Panc1 (cell line): ENCODE measurements at regions of chr6 and their contacts with region 1.

Region 1: DNA sequence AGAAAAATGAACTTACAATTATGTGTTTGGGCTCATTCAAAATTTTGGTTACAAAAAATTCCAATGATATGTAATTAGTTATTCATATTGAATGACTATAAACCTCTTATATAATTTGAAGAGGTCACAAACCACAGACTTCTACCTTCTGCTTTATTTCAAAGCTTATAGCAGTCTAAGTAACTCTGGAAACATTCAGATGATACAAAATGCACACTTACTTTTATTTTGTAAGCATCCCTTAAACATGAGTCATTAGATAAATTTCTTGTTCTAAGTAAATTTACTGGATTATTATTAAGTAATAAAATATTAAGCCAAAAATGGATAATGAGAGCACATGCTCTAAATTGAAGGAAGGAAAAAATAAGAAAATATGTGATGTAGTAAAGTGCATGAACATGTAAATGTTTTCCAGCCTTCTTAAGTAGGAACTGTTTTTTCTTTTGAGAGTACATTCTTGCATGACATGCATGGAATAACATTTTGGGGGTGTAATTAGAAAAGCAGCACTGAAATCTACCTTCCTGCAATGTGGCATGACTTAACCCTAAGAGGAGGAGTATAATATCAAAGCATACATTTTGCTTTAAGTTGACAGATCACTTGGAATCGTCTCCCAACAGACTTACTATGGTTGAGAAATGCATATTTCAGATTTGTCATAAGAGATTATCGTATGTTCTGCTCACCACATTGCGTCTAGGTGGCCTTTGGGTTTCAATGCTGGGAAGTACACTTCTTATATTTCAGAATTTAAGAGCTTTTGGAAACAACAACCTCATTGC is 372.7 kb upstream of the HSF2 start:
- DNase-seq: no peak
- ATAC-seq: no peak
- H3K4me3 ChIP-seq: no peak overlapping the region
- H3K27ac ChIP-seq: no peak overlapping the region
- H3K4me1 ChIP-seq: no peaks in the 10 kb centered on the region
- H3K27me3 ChIP-seq: no peaks in the 10 kb centered on the region
- CTCF ChIP-seq: no peak

Region 2: DNA sequence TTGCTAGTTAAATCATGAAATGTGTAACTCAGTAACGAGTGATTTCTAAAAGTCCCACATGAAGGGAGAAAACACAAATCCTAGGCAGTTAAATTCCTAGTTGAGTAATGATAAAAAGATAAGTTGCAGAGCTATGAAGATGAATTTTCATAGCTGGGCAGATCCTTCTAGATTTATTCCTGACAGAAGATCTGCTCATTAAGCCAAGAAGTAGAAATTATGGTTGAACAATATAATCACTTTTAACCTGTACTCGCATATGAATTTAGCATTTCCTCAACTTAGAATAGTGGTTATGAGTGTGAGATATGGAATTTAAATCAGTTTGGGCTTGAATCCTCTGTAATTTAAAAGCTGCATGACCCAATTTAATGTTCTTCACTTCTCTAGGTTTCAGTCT is 13.5 kb after region 1 on chr6:
- CTCF ChIA-PET with region 1: no interaction called
- POLR2A ChIA-PET with region 1: no interaction called
- in situ Hi-C with region 1: no loop called
- intact Hi-C with region 1: loop called (anchors 1 kb)
- DNase-seq: no peak
- ATAC-seq: no peak
- H3K4me3 ChIP-seq: no peak overlapping the region
- H3K27ac ChIP-seq: no peak overlapping the region
- H3K4me1 ChIP-seq: no peaks in the 10 kb centered on the region
- H3K27me3 ChIP-seq: no peaks in the 10 kb centered on the region
- CTCF ChIP-seq: no peak

Region 3: DNA sequence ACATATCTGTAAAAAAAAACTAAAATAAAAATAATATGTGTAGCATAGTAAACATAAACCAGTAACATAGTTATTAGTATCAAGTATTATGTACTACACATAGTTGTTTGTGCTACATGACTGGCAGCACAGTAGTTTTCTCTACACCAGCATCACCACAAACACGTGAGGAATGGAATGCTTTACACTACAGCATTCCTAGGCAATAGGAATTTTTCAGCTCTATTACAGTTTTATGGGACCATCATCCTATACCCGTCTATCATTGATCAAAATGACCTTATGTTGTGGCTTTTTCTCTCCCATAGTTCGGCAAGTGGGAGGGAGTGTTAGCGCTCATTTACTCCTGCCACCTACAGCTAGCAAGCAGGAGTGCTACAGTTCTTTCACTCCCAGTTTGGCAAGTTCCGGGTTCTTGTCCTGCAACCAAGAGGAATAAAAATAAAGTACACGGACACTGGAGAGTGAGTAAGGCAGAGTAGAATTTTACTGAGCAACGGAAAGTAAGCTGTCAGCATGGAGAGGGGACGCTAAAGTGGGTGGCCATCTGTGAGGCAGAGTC is 175.9 kb after region 1 on chr6:
- CTCF ChIA-PET with region 1: no interaction called
- POLR2A ChIA-PET with region 1: no interaction called
- in situ Hi-C with region 1: no loop called
- intact Hi-C with region 1: no loop called
- DNase-seq: no peak
- ATAC-seq: no peak
- H3K4me3 ChIP-seq: no peak overlapping the region
- H3K27ac ChIP-seq: no peak overlapping the region
- H3K4me1 ChIP-seq: no peaks in the 10 kb centered on the region
- H3K27me3 ChIP-seq: no peaks in the 10 kb centered on the region
- CTCF ChIP-seq: 0 out of 2 replicates have a peak, but pooled peaks have one; percentile 9